WTC11 (cell line): ENCODE measurements at regions of chr1 and their contacts with region 1.

Region 1: GRCh38 chr1:229258031-229258756 is 12.7 kb upstream of the RAB4A start:
- DNase-seq: peak; percentile 62
- ATAC-seq: peak; percentile 76
- H3K4me3 Mint-ChIP-seq: no peak overlapping the region
- H3K27ac Mint-ChIP-seq: peak overlapping the region; percentile 55
- H3K4me1 Mint-ChIP-seq: peaks cover 30% of the 10 kb centered on the region
- H3K27me3 Mint-ChIP-seq: no peaks in the 10 kb centered on the region
- CTCF ChIP-seq: peak; percentile 80

Region 2: GRCh38 chr1:228664399-228664914 is 593.7 kb before region 1 on chr1:
- CTCF ChIA-PET with region 1: interaction called, 18 read pairs
- POLR2A ChIA-PET with region 1: no interaction called
- DNase-seq: peak; percentile 84
- ATAC-seq: peak; percentile 47; the same call in 1 of the 2 replicates
- H3K4me3 Mint-ChIP-seq: no peak overlapping the region
- H3K27ac Mint-ChIP-seq: no peak overlapping the region
- H3K4me1 Mint-ChIP-seq: peaks cover 6% of the 10 kb centered on the region; the same call in 1 of the 2 replicates
- H3K27me3 Mint-ChIP-seq: peaks cover 2% of the 10 kb centered on the region
- CTCF ChIP-seq: peak; percentile 80

Region 3: GRCh38 chr1:228734881-228735801 is 523.1 kb before region 1 on chr1 and contains the start of gene RHOU:
- CTCF ChIA-PET with region 1: interaction called, 25 read pairs
- POLR2A ChIA-PET with region 1: no interaction called
- DNase-seq: peak; percentile 63
- ATAC-seq: peak; percentile 73
- H3K4me3 Mint-ChIP-seq: peak within 1 kb of the TSS; percentile 80
- H3K27ac Mint-ChIP-seq: no peak within 1 kb of the TSS
- H3K4me1 Mint-ChIP-seq: peaks cover 25% of the 10 kb centered on the region
- H3K27me3 Mint-ChIP-seq: peaks cover 44% of the 10 kb centered on the region
- CTCF ChIP-seq: peak; percentile 59
- total RNA-seq, gene RHOU: 5.8 to 6.0 TPM (median 5.8 TPM) in 3 replicates

Region 4: GRCh38 chr1:229227298-229227919 is 30.8 kb before region 1 on chr1:
- CTCF ChIA-PET with region 1: interaction called, 61 read pairs
- POLR2A ChIA-PET with region 1: no interaction called
- DNase-seq: peak; percentile 91
- ATAC-seq: peak; percentile 40
- H3K4me3 Mint-ChIP-seq: no peak overlapping the region
- H3K27ac Mint-ChIP-seq: peak overlapping the region; percentile 86
- H3K4me1 Mint-ChIP-seq: peaks cover 65% of the 10 kb centered on the region
- H3K27me3 Mint-ChIP-seq: no peaks in the 10 kb centered on the region; the same call in 1 of the 2 replicates
- CTCF ChIP-seq: peak; percentile 95

Region 5: GRCh38 chr1:229440851-229441537 is 182.8 kb after region 1 on chr1:
- CTCF ChIA-PET with region 1: no interaction called
- POLR2A ChIA-PET with region 1: no interaction called
- DNase-seq: no peak
- ATAC-seq: no peak
- H3K4me3 Mint-ChIP-seq: no peak overlapping the region
- H3K27ac Mint-ChIP-seq: no peak overlapping the region
- H3K4me1 Mint-ChIP-seq: no peaks in the 10 kb centered on the region
- H3K27me3 Mint-ChIP-seq: peaks cover 12% of the 10 kb centered on the region
- CTCF ChIP-seq: no peak

Region 6: DNA sequence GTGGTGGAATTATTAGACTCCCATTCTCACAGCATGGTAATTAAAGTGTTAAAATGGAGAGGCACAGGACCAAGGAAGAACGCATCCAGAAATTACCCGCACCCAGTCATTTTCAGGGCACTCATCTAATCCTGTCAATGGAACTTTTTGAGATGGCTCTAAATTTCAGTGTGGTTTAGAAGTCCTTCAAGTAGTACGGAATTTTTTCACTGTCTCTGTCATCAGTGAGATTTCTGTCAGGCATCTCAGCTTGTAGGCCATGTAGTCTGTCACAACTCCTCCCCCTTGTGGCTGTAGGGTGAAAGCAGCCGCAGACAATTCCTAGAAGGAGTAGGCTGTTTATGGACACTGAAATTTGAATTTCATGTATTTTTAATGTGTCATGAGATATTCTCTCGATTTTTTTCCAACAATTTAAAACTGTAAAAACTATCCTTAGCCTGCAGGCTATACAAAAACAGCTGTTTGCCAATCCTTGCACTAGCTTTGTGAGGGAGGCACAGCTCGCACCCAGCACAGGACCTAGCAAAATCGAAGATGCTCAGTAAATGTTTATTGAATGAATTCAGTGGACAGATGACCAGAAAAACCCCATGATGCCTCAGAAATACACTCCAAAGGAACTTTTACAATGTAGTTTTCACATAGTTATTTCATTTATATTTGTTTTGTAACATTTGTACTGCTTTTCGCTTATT is 256.5 kb after region 1 on chr1:
- CTCF ChIA-PET with region 1: interaction called, 15 read pairs
- POLR2A ChIA-PET with region 1: no interaction called
- DNase-seq: peak; percentile 59
- ATAC-seq: peak; percentile 87
- H3K4me3 Mint-ChIP-seq: no peak overlapping the region
- H3K27ac Mint-ChIP-seq: no peak overlapping the region
- H3K4me1 Mint-ChIP-seq: no peaks in the 10 kb centered on the region
- H3K27me3 Mint-ChIP-seq: no peaks in the 10 kb centered on the region; the same call in 1 of the 2 replicates
- CTCF ChIP-seq: peak; percentile 54